ENCODE measurements at regions of chr22 and their contacts with region 1.

Region 1: DNA sequence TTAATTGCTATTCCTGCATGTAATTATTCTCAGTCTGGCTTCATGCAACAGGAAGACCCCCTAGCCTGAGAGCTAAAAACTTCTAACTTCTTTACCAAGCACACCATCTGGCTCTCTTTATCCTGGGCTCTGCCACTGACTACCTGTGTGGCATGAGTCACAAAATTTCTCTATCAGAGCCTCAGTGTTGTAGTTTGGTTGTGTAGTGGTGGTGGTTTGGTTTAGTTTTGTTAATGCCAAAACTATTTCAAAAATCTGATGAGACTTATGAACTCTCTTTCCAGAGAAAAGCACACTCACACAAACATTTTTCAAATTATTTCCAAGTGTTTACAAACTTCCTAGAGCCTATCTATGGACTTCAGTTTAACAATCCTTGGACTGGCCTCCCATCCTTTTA is 7.5 kb upstream of the IL17RA start:
- DNase-seq: no peak
- H3K4me3 Mint-ChIP-seq: no peak overlapping the region
- H3K27ac Mint-ChIP-seq: no peak overlapping the region
- H3K4me1 Mint-ChIP-seq: peaks cover 17% of the 10 kb centered on the region
- H3K27me3 Mint-ChIP-seq: peaks cover 6% of the 10 kb centered on the region

Region 2: GRCh38 chr22:17119481-17120202 is 42.4 kb after region 1 on chr22:
- CTCF ChIA-PET with region 1: no interaction called
- POLR2A ChIA-PET with region 1: no interaction called
- intact Hi-C with region 1: loop called (anchors 5 kb)
- DNase-seq: peak; percentile 41
- H3K4me3 Mint-ChIP-seq: no peak overlapping the region
- H3K27ac Mint-ChIP-seq: no peak overlapping the region
- H3K4me1 Mint-ChIP-seq: peaks cover 44% of the 10 kb centered on the region
- H3K27me3 Mint-ChIP-seq: peaks cover 10% of the 10 kb centered on the region

Region 3: DNA sequence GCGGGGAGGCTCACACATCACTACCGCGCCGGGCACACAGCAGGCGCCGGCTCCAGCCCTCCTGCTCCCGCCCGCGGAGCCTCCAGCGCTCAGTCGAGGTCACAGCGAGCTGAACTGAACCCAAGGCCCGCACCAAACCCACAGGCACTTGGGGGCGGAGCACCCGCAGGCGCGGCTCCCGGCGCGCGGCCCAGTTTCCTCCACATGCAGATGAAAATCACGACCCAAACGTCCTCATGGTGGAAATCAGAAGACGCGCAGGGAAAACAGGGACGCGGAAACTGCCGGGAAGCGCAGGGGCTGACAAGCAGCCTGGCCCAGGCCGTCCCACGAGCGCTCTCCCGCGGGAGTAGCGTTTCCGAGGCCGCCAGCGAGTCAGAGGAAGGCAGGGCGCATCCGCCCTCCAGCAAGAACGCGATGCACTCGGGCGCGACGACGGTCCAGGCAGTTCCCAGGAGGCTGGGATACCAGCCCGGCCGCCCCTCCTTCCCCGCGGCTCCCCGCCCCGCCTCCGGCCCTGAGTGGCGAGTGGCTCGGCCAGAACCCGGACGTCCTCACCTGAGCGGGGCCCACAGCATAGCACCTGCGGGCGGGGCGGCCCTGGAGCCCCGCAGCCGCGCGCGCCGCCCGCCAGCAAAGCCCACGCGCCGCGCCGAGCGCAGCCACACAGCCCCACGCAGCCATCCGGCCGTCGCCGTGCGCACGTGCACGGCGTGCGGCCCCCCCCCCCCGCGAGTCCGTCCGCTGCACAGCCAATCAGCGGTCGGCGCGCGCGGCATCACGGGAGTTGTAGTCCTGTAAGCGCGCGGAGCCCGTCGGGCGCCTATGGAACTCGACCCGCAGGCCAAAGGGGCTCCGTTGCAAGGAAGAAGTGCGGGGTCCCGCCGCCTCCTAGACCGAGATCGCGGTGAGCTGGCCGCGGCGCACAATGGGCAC is 81.6 kb after region 1 on chr22 and contains the start of gene HDHD5:
- CTCF ChIA-PET with region 1: interaction called, 6 read pairs
- POLR2A ChIA-PET with region 1: no interaction called
- intact Hi-C with region 1: loop called (anchors 1 kb)
- DNase-seq: peak; percentile 91
- H3K4me3 Mint-ChIP-seq: peak within 1 kb of the TSS; percentile 80
- H3K27ac Mint-ChIP-seq: peak within 1 kb of the TSS; percentile 84
- H3K4me1 Mint-ChIP-seq: peaks cover 30% of the 10 kb centered on the region
- H3K27me3 Mint-ChIP-seq: no peaks in the 10 kb centered on the region
- total RNA-seq, gene HDHD5: 42.2 to 42.9 TPM

Region 4: DNA sequence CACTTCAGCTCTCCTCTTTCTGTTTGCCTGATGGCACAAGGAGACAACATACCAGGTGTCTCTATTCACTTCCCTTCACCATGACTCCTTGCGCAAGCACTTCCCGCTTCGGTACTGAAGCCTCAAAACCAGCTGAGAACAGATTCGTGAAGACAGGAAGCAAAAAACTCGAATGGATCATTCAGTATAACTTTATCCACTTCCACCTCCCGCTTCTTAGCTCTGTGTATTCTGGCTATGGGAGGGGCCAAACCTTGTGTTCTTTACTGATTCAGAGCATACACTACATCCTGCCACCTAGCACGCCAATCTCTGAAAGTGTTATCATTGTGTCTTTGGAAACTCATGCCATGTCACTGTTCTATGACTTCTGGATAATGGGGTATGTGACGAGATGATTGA is 204.2 kb after region 1 on chr22:
- CTCF ChIA-PET with region 1: interaction called, 3 read pairs
- POLR2A ChIA-PET with region 1: no interaction called
- intact Hi-C with region 1: loop called (anchors 1 kb)
- DNase-seq: peak; percentile 34
- H3K4me3 Mint-ChIP-seq: peak overlapping the region; percentile 27
- H3K27ac Mint-ChIP-seq: peak overlapping the region; percentile 81
- H3K4me1 Mint-ChIP-seq: peaks cover 16% of the 10 kb centered on the region
- H3K27me3 Mint-ChIP-seq: no peaks in the 10 kb centered on the region

Region 5: DNA sequence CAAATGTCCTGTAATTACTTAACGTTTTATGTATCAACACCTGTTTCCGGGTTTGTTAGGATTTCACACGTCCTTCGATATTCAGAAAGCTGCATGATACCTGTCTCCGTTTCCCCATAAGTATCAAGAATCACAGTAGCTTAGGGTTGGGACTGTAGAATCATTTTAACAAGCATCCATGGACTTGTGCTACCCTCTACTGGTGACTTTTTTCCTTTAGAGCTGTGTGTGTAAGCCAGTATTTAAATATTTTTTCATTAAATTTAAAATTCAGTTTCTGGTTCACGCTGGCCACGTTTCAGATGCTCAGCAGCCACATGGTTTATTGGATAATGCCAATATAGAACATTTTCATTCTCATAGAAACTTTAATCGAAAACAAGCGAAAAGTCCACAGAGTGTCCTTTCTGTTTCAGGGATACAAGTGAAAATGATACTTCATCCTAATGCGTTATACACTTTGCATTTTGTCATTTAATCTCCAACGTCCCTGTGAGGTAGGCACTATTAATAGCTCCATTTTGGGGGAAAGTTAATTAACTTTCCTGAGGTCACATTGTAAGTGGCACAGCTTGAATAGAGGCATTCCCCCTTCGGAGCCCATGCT is 424.5 kb after region 1 on chr22:
- CTCF ChIA-PET with region 1: interaction called, 48 read pairs
- POLR2A ChIA-PET with region 1: no interaction called
- intact Hi-C with region 1: loop called (anchors 1 kb)
- DNase-seq: no peak
- H3K4me3 Mint-ChIP-seq: no peak overlapping the region
- H3K27ac Mint-ChIP-seq: no peak overlapping the region
- H3K4me1 Mint-ChIP-seq: no peaks in the 10 kb centered on the region
- H3K27me3 Mint-ChIP-seq: peaks cover 6% of the 10 kb centered on the region

Region 6: GRCh38 chr22:17606496-17606895 is 529.2 kb after region 1 on chr22:
- CTCF ChIA-PET with region 1: no interaction called
- POLR2A ChIA-PET with region 1: no interaction called
- intact Hi-C with region 1: no loop called
- DNase-seq: no peak
- H3K4me3 Mint-ChIP-seq: no peak overlapping the region
- H3K27ac Mint-ChIP-seq: no peak overlapping the region
- H3K4me1 Mint-ChIP-seq: peaks cover 3% of the 10 kb centered on the region
- H3K27me3 Mint-ChIP-seq: no peaks in the 10 kb centered on the region

Measured in activated CD4-positive, alpha-beta memory T cell treated with anti-CD3 and anti-CD28 coated beads for 36 hours (primary cell).